B cell (primary cell): ENCODE measurements at regions of chr7 and their contacts with region 1.

Region 1: GRCh38 chr7:5193880-5194279 is 3.8 kb downstream of the WIPI2 start:
- DNase-seq: no peak
- ATAC-seq: no peak
- H3K4me3 ChIP-seq: no peak overlapping the region
- H3K4me3 Mint-ChIP-seq: no peak overlapping the region
- H3K27ac ChIP-seq: no peak overlapping the region
- H3K27ac Mint-ChIP-seq: no peak overlapping the region
- H3K4me1 ChIP-seq: peaks cover 18 to 22% of the 10 kb centered on the region in 2 donors
- H3K4me1 Mint-ChIP-seq: peaks cover 21% of the 10 kb centered on the region
- H3K27me3 ChIP-seq: no peaks in the 10 kb centered on the region
- H3K27me3 Mint-ChIP-seq: no peaks in the 10 kb centered on the region
- CTCF ChIP-seq: no peak

Region 2: GRCh38 chr7:4791738-4792536 is 401.9 kb before region 1 on chr7:
- CTCF ChIA-PET with region 1: no interaction called
- POLR2A ChIA-PET with region 1: no interaction called
- intact Hi-C with region 1: loop called (anchors 5 kb)
- DNase-seq: peak; percentile 87
- ATAC-seq: peak; percentile 94
- H3K4me3 ChIP-seq: peak overlapping the region in 4 of 5 experiments; percentile 47 to 63 (median 61)
- H3K4me3 Mint-ChIP-seq: peak overlapping the region; percentile 61
- H3K27ac ChIP-seq: no peak overlapping the region
- H3K27ac Mint-ChIP-seq: no peak overlapping the region
- H3K4me1 ChIP-seq: peaks cover 0 to 9% of the 10 kb centered on the region in 2 donors
- H3K4me1 Mint-ChIP-seq: peaks cover 2% of the 10 kb centered on the region
- H3K27me3 ChIP-seq: no peaks in the 10 kb centered on the region
- H3K27me3 Mint-ChIP-seq: no peaks in the 10 kb centered on the region
- CTCF ChIP-seq: peak; percentile 79

Region 3: DNA sequence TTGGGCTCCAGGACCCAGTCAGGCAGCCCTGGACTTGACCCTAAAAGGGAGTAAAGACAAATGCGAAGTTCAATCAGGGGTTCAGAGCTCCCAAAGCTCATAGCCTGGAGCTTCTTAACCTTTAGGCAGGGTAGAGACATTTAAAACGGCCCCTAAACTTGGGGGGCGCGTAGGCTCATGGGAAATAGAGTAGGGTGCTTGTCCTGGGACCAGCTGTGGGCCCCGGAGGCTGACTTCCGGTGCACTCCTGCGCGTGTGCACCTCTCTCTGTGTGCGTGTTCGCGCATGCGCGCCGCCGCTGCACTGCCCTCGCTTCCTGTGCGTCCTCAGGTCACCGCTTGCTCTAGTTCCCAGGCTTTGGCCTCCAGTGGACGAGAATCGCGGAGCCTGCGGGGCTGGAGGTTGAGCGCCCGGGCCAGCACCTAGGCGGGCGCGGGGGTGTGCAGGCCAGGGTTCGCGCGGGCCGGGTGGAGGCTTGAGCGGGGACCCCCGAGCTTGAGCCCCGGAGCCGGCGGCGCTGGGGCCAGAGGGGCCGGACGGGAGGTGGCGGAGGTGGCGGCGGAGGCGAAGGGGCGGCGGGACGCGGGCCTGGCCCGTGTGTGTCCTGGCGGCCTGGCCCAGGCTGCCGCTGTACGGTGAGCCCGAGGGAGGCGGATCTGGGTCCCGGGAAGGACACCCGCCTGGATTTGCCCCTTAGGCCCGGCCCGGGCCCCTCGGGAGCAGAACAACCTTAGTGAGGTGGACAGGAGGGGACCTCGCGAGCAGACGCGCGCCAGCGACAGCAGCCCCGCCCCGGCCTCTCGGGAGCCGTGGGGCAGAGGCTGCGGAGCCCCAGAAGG is 148.1 kb before region 1 on chr7 and contains the start of gene RBAK:
- CTCF ChIA-PET with region 1: no interaction called
- POLR2A ChIA-PET with region 1: no interaction called
- intact Hi-C with region 1: loop called (anchors 5 kb)
- DNase-seq: peak; percentile 94
- ATAC-seq: peak; percentile 99
- H3K4me3 ChIP-seq: peak within 1 kb of the TSS in 4 of 5 experiments; percentile 61 to 87 (median 81)
- H3K4me3 Mint-ChIP-seq: peak within 1 kb of the TSS; percentile 95
- H3K27ac ChIP-seq: peak within 1 kb of the TSS; percentile 53 to 85
- H3K27ac Mint-ChIP-seq: peak within 1 kb of the TSS; percentile 94
- H3K4me1 ChIP-seq: peaks cover 0 to 16% of the 10 kb centered on the region in 2 donors
- H3K4me1 Mint-ChIP-seq: peaks cover 27% of the 10 kb centered on the region
- H3K27me3 ChIP-seq: no peaks in the 10 kb centered on the region
- H3K27me3 Mint-ChIP-seq: no peaks in the 10 kb centered on the region
- CTCF ChIP-seq: no peak
- total RNA-seq, gene RBAK: 18.2 and 20.3 TPM in 2 replicates

Region 4: DNA sequence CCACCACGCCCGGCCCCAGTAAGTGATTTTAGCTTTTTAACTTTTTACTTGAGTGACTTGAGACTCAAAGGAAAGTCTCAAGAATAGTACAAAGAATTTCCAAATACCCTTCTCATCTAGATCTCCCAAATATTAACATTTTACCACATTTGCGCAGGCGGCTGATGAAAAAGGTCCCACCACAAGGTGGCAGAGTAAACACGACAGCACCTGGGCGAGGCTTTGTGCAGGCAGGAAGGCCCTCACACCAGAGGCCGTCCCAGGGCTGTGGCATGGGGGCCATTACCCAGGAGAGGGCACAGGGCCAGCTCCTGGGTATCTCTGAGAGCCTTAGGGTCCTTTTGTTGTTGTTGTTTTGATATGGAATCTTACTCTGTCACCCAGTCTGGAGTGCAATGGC is 53.9 kb before region 1 on chr7:
- CTCF ChIA-PET with region 1: no interaction called
- POLR2A ChIA-PET with region 1: no interaction called
- intact Hi-C with region 1: loop called (anchors 1 kb)
- DNase-seq: peak; percentile 45
- ATAC-seq: no peak
- H3K4me3 ChIP-seq: no peak overlapping the region
- H3K4me3 Mint-ChIP-seq: no peak overlapping the region
- H3K27ac ChIP-seq: no peak overlapping the region
- H3K27ac Mint-ChIP-seq: no peak overlapping the region
- H3K4me1 ChIP-seq: peaks cover 5 to 13% of the 10 kb centered on the region in 2 donors
- H3K4me1 Mint-ChIP-seq: peaks cover 15% of the 10 kb centered on the region
- H3K27me3 ChIP-seq: no peaks in the 10 kb centered on the region
- H3K27me3 Mint-ChIP-seq: peaks cover 3% of the 10 kb centered on the region
- CTCF ChIP-seq: no peak

Region 5: DNA sequence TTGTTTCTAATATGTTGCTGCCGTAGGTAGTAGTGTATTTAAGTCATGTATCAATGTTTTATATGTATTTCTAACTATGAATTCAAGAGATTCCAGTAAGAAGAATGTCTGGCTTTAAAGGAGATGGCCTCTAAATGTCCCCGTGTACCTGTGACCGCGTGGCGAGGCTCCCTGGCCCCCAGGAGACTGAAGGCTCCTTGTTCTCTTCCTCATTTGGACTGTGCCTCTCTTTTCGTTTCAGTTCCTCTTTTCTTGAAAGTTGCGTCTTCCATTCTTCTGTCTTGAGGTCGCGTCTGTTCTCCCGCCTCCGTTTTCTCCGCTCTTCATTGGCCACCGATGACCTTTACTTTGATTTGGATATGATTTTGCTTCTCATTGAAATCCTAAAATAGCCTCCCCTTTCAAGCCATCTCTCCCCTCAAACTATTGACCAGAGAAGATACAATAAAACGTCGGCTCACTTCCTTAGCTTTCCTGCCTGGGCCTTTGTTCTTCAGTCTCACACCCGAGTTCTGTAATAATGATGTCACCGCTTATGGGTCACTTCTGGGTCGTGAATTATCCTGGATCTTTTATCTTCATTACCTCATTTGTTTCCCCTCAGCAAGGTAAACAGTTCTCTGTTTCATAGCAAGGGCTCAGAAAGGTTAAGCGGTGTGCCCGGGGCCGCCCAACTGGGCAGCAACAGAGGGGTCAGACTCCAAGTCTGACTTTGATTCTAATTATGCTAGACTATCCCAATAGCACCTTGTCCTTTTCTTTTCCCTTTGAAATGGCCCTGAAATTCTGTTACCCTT is 24.9 kb after region 1 on chr7:
- CTCF ChIA-PET with region 1: interaction called, 3 read pairs
- POLR2A ChIA-PET with region 1: no interaction called
- intact Hi-C with region 1: loop called (anchors 1 kb)
- DNase-seq: peak; percentile 92
- ATAC-seq: peak; percentile 92
- H3K4me3 ChIP-seq: peak overlapping the region in 2 of 5 experiments; percentile 3 to 20
- H3K4me3 Mint-ChIP-seq: peak overlapping the region; percentile 76
- H3K27ac ChIP-seq: peak overlapping the region; percentile 80 to 89
- H3K27ac Mint-ChIP-seq: peak overlapping the region; percentile 89
- H3K4me1 ChIP-seq: peaks cover 25 to 33% of the 10 kb centered on the region in 2 donors
- H3K4me1 Mint-ChIP-seq: peaks cover 30% of the 10 kb centered on the region
- H3K27me3 ChIP-seq: no peaks in the 10 kb centered on the region
- H3K27me3 Mint-ChIP-seq: no peaks in the 10 kb centered on the region
- CTCF ChIP-seq: no peak